WTC11 (cell line): ENCODE measurements at regions of chr3 and their contacts with region 1.

Region 1: GRCh38 chr3:39812537-39812936 is 3.1 kb downstream of the MYRIP start:
- DNase-seq: peak; percentile 49
- ATAC-seq: no peak
- H3K4me3 Mint-ChIP-seq: no peak overlapping the region
- H3K27ac Mint-ChIP-seq: no peak overlapping the region
- H3K4me1 Mint-ChIP-seq: peaks cover 26% of the 10 kb centered on the region
- H3K27me3 Mint-ChIP-seq: peaks cover 48% of the 10 kb centered on the region
- CTCF ChIP-seq: peak; percentile 37; the same call in 1 of the 2 replicates

Region 2: GRCh38 chr3:39911465-39912309 is 99.2 kb after region 1 on chr3:
- CTCF ChIA-PET with region 1: interaction called, 10 read pairs
- POLR2A ChIA-PET with region 1: no interaction called
- DNase-seq: peak; percentile 18
- ATAC-seq: peak; percentile 94
- H3K4me3 Mint-ChIP-seq: no peak overlapping the region
- H3K27ac Mint-ChIP-seq: no peak overlapping the region; the same call in 1 of the 2 replicates
- H3K4me1 Mint-ChIP-seq: peaks cover 13% of the 10 kb centered on the region
- H3K27me3 Mint-ChIP-seq: no peaks in the 10 kb centered on the region
- CTCF ChIP-seq: no peak

Region 3: GRCh38 chr3:39990532-39990931 is 178.0 kb after region 1 on chr3:
- CTCF ChIA-PET with region 1: interaction called, 23 read pairs
- POLR2A ChIA-PET with region 1: no interaction called
- DNase-seq: peak; percentile 50
- ATAC-seq: peak; percentile 71
- H3K4me3 Mint-ChIP-seq: no peak overlapping the region
- H3K27ac Mint-ChIP-seq: no peak overlapping the region
- H3K4me1 Mint-ChIP-seq: no peaks in the 10 kb centered on the region
- H3K27me3 Mint-ChIP-seq: peaks cover 15% of the 10 kb centered on the region
- CTCF ChIP-seq: peak; percentile 56

Region 4: GRCh38 chr3:40043444-40043755 is 230.9 kb after region 1 on chr3:
- CTCF ChIA-PET with region 1: no interaction called
- POLR2A ChIA-PET with region 1: no interaction called
- DNase-seq: no peak
- ATAC-seq: no peak
- H3K4me3 Mint-ChIP-seq: no peak overlapping the region
- H3K27ac Mint-ChIP-seq: no peak overlapping the region
- H3K4me1 Mint-ChIP-seq: peaks cover 10% of the 10 kb centered on the region
- H3K27me3 Mint-ChIP-seq: no peaks in the 10 kb centered on the region
- CTCF ChIP-seq: no peak